Stomach (tissue), 19 donors: ENCODE measurements at regions of chr9 and their contacts with region 1.

Region 1: DNA sequence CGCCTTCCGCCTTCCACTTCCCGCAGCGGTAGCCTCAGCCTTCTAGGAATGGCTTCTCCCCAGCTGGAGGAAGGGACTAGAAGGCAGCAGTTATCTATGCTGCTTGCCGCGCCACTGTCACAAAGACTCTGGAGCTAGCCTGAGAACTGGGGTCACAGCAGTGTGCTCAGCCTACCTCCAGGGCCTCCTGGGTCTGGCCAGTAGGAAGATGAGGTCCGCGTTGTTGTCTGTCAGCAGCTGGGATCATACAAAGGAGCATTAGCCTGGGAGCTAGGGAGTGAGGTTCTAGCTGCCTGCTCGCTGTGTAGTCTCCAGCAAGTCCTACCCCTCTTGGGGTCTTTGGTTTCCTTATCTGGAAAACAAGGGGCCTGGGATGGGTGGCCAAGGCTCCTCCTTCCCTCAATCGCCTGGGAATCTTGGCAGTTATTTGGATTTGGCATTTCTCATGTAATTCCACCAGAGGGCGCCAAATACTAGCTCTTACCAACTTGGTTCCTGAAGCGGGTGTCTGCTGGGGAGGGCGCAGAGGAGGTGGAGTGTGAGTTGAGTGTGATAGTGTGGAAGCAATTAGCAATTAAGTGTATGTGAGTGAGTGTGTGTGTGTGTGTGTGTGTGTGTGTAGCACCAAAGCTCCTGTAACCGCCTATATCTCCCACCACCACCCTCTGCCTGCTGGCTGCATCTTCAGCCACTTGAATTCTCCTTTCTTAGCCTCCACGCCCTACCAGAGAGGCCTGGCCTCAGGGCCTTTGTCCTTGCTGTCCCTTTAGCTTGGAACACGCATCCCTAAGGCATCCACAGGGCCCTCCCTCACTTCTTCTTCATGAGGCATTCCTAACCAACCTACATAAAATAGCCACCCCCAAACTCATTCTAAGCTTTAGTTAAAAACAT is 97.1 kb downstream of the ENTREP1 start:
- DNase-seq: peak; percentile 56 to 86
- H3K4me3 ChIP-seq: no peak overlapping the region
- H3K27ac ChIP-seq: no peak overlapping the region
- H3K4me1 ChIP-seq: no peaks in the 10 kb centered on the region
- H3K27me3 ChIP-seq: no peaks in the 10 kb centered on the region
- CTCF ChIP-seq: peak in 5 of 7 experiments; percentile 68 to 85 (median 78)
- EP300 ChIP-seq: no peak
- POLR2A ChIP-seq: no peak

Region 2: DNA sequence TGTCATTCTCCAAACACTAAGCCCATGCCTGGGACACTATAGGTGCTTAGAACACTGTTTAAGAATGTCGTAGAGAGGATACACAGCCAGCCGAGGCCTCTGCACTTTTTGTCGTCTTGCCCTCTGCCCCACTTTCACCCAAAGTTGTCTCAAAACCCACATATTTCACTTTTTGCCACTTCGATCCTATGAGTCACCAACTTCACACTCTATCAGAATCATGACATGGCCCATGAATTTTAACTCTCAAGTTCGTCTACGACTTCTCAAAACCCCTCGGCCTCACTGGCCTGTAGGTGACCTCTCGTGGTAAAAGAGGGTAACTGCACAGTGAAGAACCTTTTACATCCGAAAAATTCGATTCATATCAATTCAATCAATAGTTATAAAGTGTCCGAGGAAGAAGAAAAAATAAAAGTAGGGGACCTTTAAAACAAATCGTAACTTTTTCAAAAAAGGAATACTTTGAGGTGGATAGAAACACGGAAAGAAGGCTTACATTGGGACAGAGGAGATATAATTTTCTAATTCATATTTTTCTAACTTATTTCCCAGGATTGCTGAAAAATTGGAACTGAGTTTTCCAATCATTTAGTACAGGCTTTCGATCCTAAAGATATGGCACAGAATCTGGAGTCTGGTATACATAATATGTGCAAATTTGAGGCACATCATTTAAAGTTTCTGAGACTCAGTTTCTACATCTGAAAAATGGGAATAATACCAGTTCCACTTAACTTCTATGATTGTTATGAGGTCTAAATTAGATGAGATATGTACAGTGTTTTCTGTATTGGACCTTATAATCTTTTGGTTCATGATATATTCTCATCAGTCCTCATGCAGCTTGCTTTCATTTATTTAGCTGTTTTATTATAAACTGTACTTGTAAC is 127.4 kb after region 1 on chr9:
- intact Hi-C with region 1: loop called (anchors 2 kb)
- DNase-seq: peak in 1 of 2 donors; percentile 73
- H3K4me3 ChIP-seq: no peak overlapping the region
- H3K27ac ChIP-seq: no peak overlapping the region
- H3K4me1 ChIP-seq: peaks cover 0 to 7% (median 3%) of the 10 kb centered on the region in 4 donors
- H3K27me3 ChIP-seq: no peaks in the 10 kb centered on the region
- CTCF ChIP-seq: peak in 5 of 7 experiments; percentile 71 to 88 (median 78)
- EP300 ChIP-seq: no peak
- POLR2A ChIP-seq: no peak

Region 3: GRCh38 chr9:69877854-69878514 is 455.8 kb after region 1 on chr9:
- intact Hi-C with region 1: loop called (anchors 10 kb)
- DNase-seq: peak in 1 of 2 donors; percentile 59
- H3K4me3 ChIP-seq: no peak overlapping the region
- H3K27ac ChIP-seq: no peak overlapping the region
- H3K4me1 ChIP-seq: no peaks in the 10 kb centered on the region
- H3K27me3 ChIP-seq: no peaks in the 10 kb centered on the region
- CTCF ChIP-seq: peak in 5 of 7 experiments; percentile 25 to 53 (median 35)
- EP300 ChIP-seq: no peak
- POLR2A ChIP-seq: no peak